ENCODE measurements at regions of chr9 and their contacts with region 1.

Region 1: GRCh38 chr9:36400332-36401163 is 479 bp upstream of the RNF38 start:
- DNase-seq: peak; percentile 89 to 97 (median 96)
- ATAC-seq: peak; percentile 96
- H3K4me3 ChIP-seq: peak overlapping the region; percentile 64
- H3K27ac ChIP-seq: peak overlapping the region; percentile 68
- H3K4me1 ChIP-seq: no peaks in the 10 kb centered on the region
- H3K27me3 ChIP-seq: no peaks in the 10 kb centered on the region

Region 2: GRCh38 chr9:36487482-36488388 is 87.2 kb after region 1 on chr9:
- intact Hi-C with region 1: loop called in 1 of 4 experiments (anchors 10 kb)
- DNase-seq: peak; percentile 95 to 98 (median 97)
- ATAC-seq: peak; percentile 99
- H3K4me3 ChIP-seq: peak overlapping the region; percentile 98
- H3K27ac ChIP-seq: peak overlapping the region; percentile 90
- H3K4me1 ChIP-seq: peaks cover 2% of the 10 kb centered on the region
- H3K27me3 ChIP-seq: no peaks in the 10 kb centered on the region

Region 3: GRCh38 chr9:36551129-36551528 is 150.6 kb after region 1 on chr9:
- intact Hi-C with region 1: loop called in 2 of 4 experiments (anchors 5 to 10 kb)
- DNase-seq: no peak
- ATAC-seq: no peak
- H3K4me3 ChIP-seq: no peak overlapping the region
- H3K27ac ChIP-seq: no peak overlapping the region
- H3K4me1 ChIP-seq: no peaks in the 10 kb centered on the region
- H3K27me3 ChIP-seq: no peaks in the 10 kb centered on the region

Measured in right cardiac atrium (tissue), 5 donors.